OCI-LY7 (cell line): ENCODE measurements at regions of chr5 and their contacts with region 1.

Region 1: GRCh38 chr5:36357391-36357975 is 55.8 kb upstream of the RANBP3L start:
- DNase-seq: no peak
- H3K4me3 ChIP-seq: no peak overlapping the region
- H3K27ac ChIP-seq: no peak overlapping the region
- H3K4me1 ChIP-seq: peaks cover 60% of the 10 kb centered on the region
- CTCF ChIP-seq: no peak

Region 2: GRCh38 chr5:36193746-36194145 is 163.7 kb before region 1 on chr5:
- CTCF ChIA-PET with region 1: no interaction called
- POLR2A ChIA-PET with region 1: no interaction called
- intact Hi-C with region 1: no loop called
- DNase-seq: no peak
- H3K4me3 ChIP-seq: no peak overlapping the region
- H3K27ac ChIP-seq: no peak overlapping the region
- H3K4me1 ChIP-seq: no peaks in the 10 kb centered on the region
- CTCF ChIP-seq: no peak

Region 3: GRCh38 chr5:36367524-36367923 is 10.0 kb after region 1 on chr5:
- CTCF ChIA-PET with region 1: no interaction called
- POLR2A ChIA-PET with region 1: interaction called, 10 read pairs
- intact Hi-C with region 1: no loop called
- DNase-seq: no peak
- H3K4me3 ChIP-seq: no peak overlapping the region
- H3K27ac ChIP-seq: no peak overlapping the region
- H3K4me1 ChIP-seq: peaks cover 17% of the 10 kb centered on the region
- CTCF ChIP-seq: no peak

Region 4: DNA sequence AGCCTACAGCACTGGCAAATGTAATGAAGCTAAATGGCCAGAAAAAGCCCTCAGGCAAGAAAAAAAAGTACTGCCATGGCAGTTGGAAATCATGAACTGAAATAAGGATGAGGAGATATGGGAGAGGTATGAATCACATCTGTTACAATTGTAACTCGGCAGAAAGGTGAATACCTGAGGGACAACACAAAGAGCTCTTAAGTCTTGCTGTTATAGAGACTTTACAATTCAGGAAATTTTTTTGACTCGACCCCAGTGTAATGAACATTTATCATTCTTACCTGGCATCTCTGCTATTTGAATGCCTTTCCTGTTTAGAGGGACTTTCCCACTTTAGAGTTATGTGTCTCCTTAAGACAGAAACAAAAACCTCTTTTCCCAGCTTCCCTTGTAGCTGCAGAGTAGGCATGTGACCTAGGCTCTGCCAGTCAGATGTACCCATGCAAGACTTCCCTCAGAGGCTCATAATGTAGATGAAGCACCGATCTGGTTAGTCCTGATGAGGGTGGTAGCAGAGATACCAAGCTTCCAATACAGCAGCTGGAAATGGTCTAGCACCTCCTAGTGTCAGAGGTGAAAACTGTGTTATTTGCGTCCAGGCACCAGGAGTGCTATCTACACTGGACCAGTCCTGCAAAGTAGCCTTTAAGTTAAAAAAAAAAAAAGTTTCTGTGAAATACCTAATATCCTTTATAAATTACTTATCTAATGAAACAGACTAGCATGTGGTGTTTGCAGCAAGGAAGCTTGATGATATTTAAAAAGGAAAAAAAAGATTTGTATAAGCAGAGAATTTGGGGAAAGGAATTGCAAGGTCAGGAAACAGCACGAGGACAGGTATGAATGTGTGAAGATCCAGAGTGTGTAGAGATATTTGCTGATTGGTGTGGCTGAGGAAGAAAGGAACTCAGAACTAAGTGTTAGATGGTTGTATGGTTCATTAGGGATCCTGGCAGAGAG is 102.0 kb after region 1 on chr5:
- CTCF ChIA-PET with region 1: no interaction called
- POLR2A ChIA-PET with region 1: no interaction called
- intact Hi-C with region 1: no loop called
- DNase-seq: peak; percentile 31
- H3K4me3 ChIP-seq: no peak overlapping the region
- H3K27ac ChIP-seq: no peak overlapping the region
- H3K4me1 ChIP-seq: no peaks in the 10 kb centered on the region
- CTCF ChIP-seq: peak; percentile 77